Mammary epithelial cell (primary cell): ENCODE measurements at regions of chr4 and their contacts with region 1.

Region 1: DNA sequence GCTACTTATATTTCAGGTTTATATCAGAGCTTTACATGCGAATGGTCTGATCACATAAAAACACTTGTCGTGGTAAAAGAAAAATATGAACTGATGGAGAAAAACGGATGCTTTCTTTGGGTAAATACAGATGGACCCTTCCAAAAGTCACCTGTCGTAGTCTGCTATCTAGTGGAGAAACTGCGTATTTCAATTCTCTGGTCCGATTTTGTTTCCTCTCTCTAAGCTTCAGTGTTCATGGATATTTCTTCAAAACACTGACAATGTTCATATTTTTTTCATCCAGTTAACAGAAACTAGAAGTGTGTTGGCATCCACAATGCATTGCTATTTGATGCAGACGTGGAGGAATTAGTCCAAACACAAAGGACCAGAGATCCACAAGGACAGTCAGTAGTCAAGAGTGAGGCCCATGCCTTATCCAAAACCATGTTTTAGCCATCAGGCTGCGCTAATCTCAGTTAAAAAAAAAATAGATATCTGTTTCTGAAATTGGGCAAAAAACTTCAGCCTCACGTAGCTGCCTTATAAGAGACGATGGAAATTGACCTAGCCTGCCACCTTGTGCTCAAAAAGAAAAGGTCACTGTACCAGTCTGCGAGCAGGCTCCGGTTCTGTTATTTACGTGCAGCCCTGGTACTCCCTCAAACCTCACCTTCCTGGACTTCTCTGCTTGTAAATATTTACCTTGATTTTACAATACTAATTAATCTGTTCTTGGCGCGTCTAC is 16.0 kb downstream of the MEPE start:
- DNase-seq: peak; percentile 33
- H3K4me3 ChIP-seq: peak overlapping the region in 1 of 3 experiments; percentile 19
- H3K27ac ChIP-seq: no peak overlapping the region
- H3K4me1 ChIP-seq: peaks cover 7% of the 10 kb centered on the region
- H3K27me3 ChIP-seq: no peaks in the 10 kb centered on the region
- CTCF ChIP-seq: peak; percentile 55 to 74

Region 2: DNA sequence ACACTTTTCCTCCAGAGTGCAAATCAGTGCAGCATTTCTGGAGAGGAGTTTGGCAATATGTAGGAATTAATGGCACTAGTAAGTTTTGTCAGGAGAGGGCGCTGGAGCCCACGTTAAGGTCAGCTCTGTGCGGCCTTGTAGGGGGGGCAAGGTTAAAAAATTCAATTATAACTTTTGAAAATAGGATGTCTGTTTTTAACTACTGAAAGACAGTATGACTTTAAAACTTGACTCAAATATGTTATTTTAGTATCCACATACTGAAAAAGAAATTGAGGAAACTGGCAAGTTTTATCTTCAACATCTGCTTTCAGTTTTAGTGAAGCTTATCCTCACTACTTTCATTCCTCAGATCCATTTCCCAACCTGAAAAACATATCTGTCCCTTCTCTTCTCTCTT is 495.2 kb before region 1 on chr4:
- CTCF ChIA-PET with region 1: interaction called, 5 read pairs
- dilution Hi-C with region 1: no loop called
- in situ Hi-C with region 1: loop called in 1 of 2 experiments (anchors 25 kb)
- intact Hi-C with region 1: loop called (anchors 5 kb)
- DNase-seq: peak; percentile 29
- H3K4me3 ChIP-seq: no peak overlapping the region
- H3K27ac ChIP-seq: no peak overlapping the region
- H3K4me1 ChIP-seq: peaks cover 7% of the 10 kb centered on the region
- H3K27me3 ChIP-seq: no peaks in the 10 kb centered on the region
- CTCF ChIP-seq: peak; percentile 56 to 76

Region 3: GRCh38 chr4:87543835-87544461 is 304.8 kb before region 1 on chr4:
- CTCF ChIA-PET with region 1: no interaction called
- dilution Hi-C with region 1: loop called (anchors 10 kb)
- in situ Hi-C with region 1: loop called (anchors 5 to 10 kb)
- intact Hi-C with region 1: loop called (anchors 2 kb)
- DNase-seq: peak; percentile 49
- H3K4me3 ChIP-seq: no peak overlapping the region
- H3K27ac ChIP-seq: no peak overlapping the region
- H3K4me1 ChIP-seq: no peaks in the 10 kb centered on the region
- H3K27me3 ChIP-seq: no peaks in the 10 kb centered on the region
- CTCF ChIP-seq: peak; percentile 53 to 75

Region 4: GRCh38 chr4:87895964-87896621 is 47.3 kb after region 1 on chr4:
- CTCF ChIA-PET with region 1: no interaction called
- dilution Hi-C with region 1: no loop called
- in situ Hi-C with region 1: no loop called
- intact Hi-C with region 1: no loop called
- DNase-seq: peak; percentile 91
- H3K4me3 ChIP-seq: no peak overlapping the region
- H3K27ac ChIP-seq: peak overlapping the region; percentile 43
- H3K4me1 ChIP-seq: peaks cover 15% of the 10 kb centered on the region
- H3K27me3 ChIP-seq: no peaks in the 10 kb centered on the region
- CTCF ChIP-seq: no peak

Region 5: DNA sequence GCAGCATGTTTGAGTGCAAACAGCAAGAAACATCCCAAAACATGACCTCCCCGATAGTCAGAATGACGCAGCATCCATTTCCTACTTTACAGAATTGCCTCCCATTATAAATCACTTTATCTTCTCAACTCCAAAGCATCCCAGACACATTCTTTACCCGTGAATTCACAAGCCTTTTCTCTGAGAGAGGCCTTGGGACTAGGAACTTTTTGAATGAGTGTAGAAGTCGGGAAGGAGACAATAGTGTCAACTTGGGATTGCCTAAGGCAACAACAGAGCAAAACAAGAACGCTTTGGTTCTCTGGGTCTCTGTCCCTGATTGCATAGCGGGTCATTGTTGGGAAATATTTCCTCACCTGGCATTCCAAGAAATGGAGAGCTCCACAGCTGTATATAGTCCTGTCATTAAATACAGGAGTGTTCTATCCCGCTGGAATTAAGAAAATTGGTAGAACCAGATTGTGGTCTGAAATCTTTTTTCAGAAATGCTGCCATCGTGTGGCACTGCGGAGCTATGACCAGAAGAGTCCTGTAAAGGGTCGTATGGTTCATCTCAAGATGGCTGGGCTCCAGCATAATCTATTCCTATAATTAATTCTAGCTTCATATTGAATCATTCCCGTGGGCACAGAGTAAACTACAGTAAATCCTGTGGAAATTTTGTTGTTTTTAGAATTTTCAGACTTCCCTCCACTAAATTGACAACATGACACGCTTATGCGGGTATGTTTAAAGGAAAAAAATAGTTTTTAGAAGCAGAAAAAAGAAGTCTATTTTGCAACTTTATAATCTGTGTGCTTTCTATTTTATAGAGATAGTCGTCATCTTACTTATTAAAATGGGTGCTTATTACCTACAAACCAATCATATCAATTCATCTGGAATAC is 124.7 kb after region 1 on chr4:
- CTCF ChIA-PET with region 1: interaction called, 16 read pairs
- dilution Hi-C with region 1: no loop called
- in situ Hi-C with region 1: loop called (anchors 5 to 10 kb)
- intact Hi-C with region 1: loop called (anchors 1 kb)
- DNase-seq: peak; percentile 79
- H3K4me3 ChIP-seq: peak overlapping the region; percentile 12 to 30 (median 23)
- H3K27ac ChIP-seq: peak overlapping the region; percentile 41
- H3K4me1 ChIP-seq: peaks cover 17% of the 10 kb centered on the region
- H3K27me3 ChIP-seq: no peaks in the 10 kb centered on the region
- CTCF ChIP-seq: peak; percentile 75 to 82

Region 6: GRCh38 chr4:88033309-88033708 is 184.5 kb after region 1 on chr4:
- CTCF ChIA-PET with region 1: no interaction called
- dilution Hi-C with region 1: no loop called
- in situ Hi-C with region 1: no loop called
- intact Hi-C with region 1: loop called (anchors 2 kb)
- DNase-seq: peak; percentile 52
- H3K4me3 ChIP-seq: no peak overlapping the region
- H3K27ac ChIP-seq: no peak overlapping the region
- H3K4me1 ChIP-seq: peaks cover 11% of the 10 kb centered on the region
- H3K27me3 ChIP-seq: no peaks in the 10 kb centered on the region
- CTCF ChIP-seq: peak; percentile 68 to 69

Region 7: DNA sequence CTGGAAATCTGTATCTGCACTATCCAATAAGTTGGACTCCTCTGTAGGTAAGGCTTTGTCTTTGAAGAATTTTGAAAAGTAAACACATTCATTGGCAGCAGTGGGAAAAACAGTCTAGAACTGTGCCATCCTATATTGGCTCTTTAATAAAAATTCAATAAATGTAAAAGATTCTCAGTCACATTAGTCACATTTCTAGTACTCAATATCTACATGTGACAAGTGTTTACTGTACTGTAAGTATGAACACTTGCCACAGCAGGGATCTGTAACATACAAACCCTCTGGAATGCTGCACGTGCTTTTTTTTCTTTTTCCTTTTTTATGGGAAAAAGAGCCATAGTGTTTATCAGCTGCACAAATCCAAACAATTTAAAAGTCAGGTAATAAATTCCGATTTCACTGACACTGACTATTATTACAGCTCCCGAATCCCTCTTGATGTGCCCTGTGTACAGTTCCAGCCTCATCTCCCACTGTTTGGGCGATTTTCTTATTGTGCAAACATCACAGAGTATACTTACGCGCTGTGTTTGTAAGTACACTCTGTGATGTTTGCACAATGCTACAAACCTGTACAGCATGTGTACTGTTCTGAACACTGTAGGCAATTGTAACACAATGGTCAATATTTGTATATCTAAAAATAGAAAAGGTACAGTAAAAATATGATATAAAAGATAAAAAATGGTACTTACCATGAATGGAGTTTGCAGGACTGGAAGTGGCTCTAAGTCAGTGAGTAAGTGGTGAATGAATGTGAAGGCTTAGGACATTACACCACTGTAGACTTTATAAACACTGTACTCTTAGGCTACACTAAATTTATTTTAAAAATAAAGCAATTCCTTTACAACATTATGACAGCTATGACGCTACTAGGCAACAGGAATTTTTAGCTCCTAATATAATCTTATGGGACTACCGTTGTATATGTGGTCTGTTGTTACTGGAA is 666.0 kb after region 1 on chr4:
- CTCF ChIA-PET with region 1: no interaction called
- dilution Hi-C with region 1: no loop called
- in situ Hi-C with region 1: loop called (anchors 25 kb)
- intact Hi-C with region 1: loop called (anchors 5 kb)
- DNase-seq: no peak
- H3K4me3 ChIP-seq: no peak overlapping the region
- H3K27ac ChIP-seq: no peak overlapping the region
- H3K4me1 ChIP-seq: no peaks in the 10 kb centered on the region
- H3K27me3 ChIP-seq: no peaks in the 10 kb centered on the region
- CTCF ChIP-seq: no peak